AG04449 (cell line): ENCODE measurements at regions of chr11 and their contacts with region 1.

Region 1: GRCh38 chr11:7571640-7572000 is 57.8 kb downstream of the PPFIBP2 start:
- DNase-seq: no peak
- H3K4me3 ChIP-seq: no peak overlapping the region
- CTCF ChIP-seq: peak; percentile 89

Region 2: GRCh38 chr11:7332962-7333361 is 238.7 kb before region 1 on chr11:
- CTCF ChIA-PET with region 1: no interaction called
- POLR2A ChIA-PET with region 1: no interaction called
- DNase-seq: no peak
- H3K4me3 ChIP-seq: no peak overlapping the region
- CTCF ChIP-seq: no peak

Region 3: DNA sequence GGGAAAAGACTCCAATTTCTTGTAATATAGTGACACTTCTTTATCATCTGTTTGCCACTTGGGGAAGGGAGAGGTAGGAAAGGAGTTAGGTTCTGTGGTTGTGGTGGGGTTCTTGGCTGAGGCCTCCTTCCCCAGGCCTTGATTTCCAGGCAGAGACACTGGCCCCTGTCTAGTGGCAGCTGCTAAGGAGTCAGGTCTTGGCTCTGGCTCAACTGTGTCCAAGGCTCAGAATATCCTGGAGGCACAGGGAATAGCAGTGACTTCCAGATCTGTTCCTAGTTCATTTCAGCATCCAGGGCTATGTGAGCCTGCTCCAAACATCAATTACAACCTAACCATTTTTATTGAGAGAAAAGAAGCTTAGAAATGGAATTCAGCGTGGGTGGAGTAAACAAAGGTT is 28.3 kb before region 1 on chr11:
- CTCF ChIA-PET with region 1: interaction called, 22 read pairs
- POLR2A ChIA-PET with region 1: no interaction called
- DNase-seq: no peak
- H3K4me3 ChIP-seq: no peak overlapping the region
- CTCF ChIP-seq: no peak

Region 4: DNA sequence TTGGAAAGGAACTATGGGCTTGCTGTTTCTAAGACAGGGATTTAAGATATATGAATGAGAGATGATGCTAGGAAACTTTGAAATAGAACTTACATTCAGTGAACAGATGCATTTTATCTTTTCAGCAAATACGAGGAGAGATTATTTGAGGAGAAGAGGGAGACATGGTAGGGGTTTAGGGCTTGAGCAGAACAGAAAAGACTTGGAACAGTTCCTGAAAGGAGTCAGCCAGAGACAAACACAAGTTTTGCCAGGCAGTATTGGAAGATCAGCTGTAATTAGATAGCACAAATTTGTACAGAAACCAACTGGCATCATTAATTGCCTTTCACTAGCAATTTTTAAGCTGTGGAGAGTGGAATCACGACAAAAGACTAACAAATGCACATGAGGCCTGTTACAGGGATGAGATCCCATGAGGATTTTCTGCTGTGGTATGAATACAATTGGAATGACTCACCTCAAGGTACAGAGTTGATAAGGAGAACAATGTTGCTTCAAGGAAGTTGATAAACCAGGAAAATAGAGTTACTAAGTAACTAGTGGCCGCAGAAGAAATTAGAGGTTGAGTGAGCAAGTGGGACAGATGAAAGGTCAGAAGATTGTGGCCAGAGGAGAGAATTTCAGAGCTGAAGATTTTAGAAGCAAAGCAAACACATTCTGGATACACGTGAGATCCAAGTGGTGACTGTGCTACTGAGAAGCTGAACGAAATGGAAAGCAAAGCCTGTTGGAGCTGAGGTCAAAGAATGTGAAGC is 33.7 kb after region 1 on chr11:
- CTCF ChIA-PET with region 1: interaction called, 17 read pairs
- POLR2A ChIA-PET with region 1: no interaction called
- DNase-seq: no peak
- H3K4me3 ChIP-seq: no peak overlapping the region
- CTCF ChIP-seq: no peak

Region 5: DNA sequence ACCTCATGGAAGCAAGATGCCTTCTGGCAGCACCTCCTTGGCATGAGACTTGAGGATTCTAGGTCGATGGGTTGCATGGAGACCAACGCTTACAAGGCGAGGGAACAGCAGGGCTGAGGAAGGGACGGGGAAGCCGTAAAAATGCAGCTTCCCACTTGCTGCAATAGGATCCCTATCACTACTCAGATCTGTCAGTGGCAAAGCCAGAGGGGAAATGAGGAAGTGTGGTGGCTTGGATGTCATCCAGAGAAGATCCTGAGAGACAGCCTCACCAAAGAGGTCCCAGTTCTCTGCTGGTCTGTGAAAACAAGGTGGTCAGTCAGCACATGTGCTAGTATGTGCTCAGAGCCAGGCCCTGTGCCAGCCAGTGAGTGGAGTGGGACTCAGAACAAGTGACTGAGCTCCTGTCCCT is 79.5 kb after region 1 on chr11:
- CTCF ChIA-PET with region 1: interaction called, 168 read pairs
- POLR2A ChIA-PET with region 1: no interaction called
- DNase-seq: no peak
- H3K4me3 ChIP-seq: no peak overlapping the region
- CTCF ChIP-seq: no peak

Region 6: DNA sequence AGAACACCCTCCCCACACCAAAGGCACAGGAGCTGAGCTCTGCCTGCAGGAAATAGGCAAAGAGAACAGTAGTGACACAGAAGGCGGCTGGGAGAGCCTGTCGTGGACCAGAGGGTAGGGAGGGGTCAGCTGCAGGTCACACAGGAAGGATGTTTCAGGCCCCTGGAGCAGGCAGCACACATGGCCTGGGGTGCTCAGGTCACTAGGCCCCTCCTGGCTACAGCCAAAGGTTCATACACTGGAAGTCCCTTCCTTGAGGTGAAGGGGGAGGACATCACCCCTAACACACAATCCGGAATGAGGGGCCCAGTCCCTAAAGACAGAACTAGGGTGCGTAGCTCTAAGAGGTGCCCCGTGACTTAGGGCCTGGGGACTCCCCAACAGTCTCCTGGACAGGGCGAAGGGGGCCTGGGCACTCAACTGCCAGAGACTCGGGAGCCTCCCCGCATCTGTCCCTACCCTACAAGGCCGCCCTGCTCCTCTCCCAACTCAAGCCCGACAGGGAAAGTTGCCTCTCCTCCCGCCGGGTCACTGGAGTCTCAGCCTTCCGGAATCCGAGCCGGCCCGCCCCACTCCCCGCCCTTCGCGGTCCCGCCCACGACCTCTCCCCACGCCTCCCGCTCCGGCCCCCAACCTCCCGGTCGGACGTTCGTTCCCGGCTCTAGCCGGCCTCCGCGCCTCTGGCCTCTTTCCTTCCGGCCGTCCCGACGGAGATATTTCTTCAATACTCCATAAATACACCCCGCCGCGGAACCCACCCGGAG is 101.5 kb after region 1 on chr11 and contains the start of gene CYB5R2:
- CTCF ChIA-PET with region 1: interaction called, 185 read pairs
- POLR2A ChIA-PET with region 1: no interaction called
- DNase-seq: no peak
- H3K4me3 ChIP-seq: peak within 1 kb of the TSS; percentile 59
- CTCF ChIP-seq: no peak

Region 7: DNA sequence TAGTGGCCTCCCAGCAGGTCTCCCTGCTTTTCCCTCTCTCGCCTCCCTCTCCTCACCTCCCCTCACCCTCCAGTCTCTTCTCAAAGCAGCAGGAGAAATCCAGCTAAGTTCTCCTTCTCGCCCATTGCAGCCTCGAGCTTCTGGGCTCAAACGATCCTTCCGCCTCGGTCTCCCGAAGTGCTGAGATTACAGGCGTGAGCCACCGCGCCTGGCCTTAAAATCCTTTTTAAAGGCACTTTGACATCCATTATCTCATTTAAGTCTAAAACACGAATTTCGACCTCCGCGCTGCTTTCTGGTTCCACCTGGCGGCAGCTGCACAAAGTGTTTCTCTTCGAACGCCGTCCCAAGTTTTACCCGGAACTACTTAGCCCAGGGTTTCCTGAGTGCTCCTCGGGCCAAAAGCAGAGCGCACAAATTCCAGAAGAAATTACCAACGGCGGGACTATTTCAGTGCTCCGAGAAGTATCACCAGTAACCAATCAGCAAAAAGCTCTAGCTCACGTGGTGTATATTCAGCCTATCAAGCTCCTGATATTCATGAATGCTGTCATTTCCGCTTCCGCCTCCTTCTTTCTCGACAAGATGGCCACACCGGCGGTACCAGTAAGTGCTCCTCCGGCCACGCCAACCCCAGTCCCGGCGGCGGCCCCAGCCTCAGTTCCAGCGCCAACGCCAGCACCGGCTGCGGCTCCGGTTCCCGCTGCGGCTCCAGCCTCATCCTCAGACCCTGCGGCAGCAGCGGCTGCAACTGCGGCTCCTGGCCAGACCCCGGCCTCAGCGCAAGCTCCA is 415.3 kb after region 1 on chr11 and contains the start of gene EIF3F:
- CTCF ChIA-PET with region 1: interaction called, 12 read pairs
- POLR2A ChIA-PET with region 1: no interaction called
- DNase-seq: peak; percentile 99
- H3K4me3 ChIP-seq: peak within 1 kb of the TSS; percentile 77
- CTCF ChIP-seq: peak; percentile 75